ENCODE measurements at regions of chr3 and their contacts with region 1.

Region 1: GRCh38 chr3:152268555-152269425 is at the start of gene MBNL1:
- DNase-seq: peak; percentile 61 to 84 (median 78)
- H3K4me3 ChIP-seq: peak within 1 kb of the TSS; percentile 62 to 97 (median 89)
- H3K27ac ChIP-seq: peak within 1 kb of the TSS; percentile 88 to 100 (median 99)
- H3K27me3 ChIP-seq: no peaks in the 10 kb centered on the region
- CTCF ChIP-seq: peak in 21 of 56 donors; percentile 3 to 37 (median 17)
- total RNA-seq, gene MBNL1: 106 to 168 (median 132) TPM

Region 2: DNA sequence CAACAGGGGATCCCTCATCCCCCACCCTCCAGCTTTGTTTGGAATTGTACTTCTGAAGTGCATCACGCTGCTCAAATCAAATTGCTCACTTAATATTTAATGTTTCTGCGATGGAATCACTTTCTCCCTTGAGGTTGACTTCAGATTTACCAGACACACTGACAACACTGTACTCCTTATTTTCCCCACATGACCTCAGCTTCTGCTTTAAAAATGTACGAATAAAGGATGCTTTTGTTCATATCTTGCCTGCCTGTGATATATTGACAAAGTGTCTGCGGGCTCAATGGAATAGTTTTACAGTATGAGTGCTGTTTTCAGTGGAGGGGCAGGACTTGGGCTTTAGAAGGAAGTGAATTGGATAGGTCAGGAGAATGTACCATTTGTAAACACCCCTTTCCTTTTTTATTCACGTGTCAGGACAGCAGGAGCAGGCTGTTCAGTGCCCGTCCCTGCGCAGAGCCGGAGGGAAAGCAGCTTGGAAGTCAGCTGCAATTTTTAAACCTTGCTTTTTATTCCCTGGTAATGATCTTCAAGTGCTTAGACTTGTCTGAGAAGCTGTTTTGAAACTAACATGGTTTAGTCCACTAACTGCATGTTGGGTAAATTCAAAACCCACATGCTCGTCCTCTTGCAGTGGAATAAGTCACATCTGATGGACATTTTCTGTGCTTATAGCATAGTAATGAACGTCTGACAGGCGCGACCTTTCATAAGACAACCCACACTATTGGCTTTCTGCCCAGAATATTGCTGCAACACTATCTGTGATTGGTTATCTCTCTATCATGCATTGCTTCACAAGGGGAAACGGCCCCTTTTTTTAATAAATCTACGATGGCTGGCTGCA is 29.8 kb after region 1 on chr3:
- intact Hi-C with region 1: loop called in 1 of 2 experiments (anchors 2 kb)
- DNase-seq: peak in 2 of 10 donors; percentile 40 to 42
- H3K4me3 ChIP-seq: peak overlapping the region; percentile 32 to 79 (median 63)
- H3K27ac ChIP-seq: peak overlapping the region; percentile 36 to 97 (median 91)
- H3K27me3 ChIP-seq: no peaks in the 10 kb centered on the region
- CTCF ChIP-seq: peak in 2 of 56 donors; percentile 11 to 13

Region 3: DNA sequence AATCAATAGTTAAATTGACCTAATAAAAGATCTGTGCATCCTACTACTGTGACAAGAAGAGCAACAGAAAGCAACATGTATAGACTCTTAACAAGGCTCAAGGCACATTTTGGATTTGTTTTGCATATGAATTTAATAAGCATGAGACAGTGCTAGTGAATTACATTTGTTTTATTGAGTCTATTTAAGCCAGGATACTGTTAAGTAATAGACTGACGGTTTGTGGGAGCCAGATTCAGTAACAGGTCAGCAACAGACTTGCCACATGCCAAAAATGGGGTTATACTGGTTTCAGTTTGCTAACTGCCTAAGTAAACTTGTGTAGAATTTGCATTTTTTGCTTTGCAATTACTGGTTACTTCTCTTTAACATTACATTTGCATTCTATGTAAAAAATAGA is 54.0 kb after region 1 on chr3:
- intact Hi-C with region 1: no loop called
- DNase-seq: no peak
- H3K4me3 ChIP-seq: peak overlapping the region in 34 of 59 donors; percentile 1 to 46 (median 26)
- H3K27ac ChIP-seq: peak overlapping the region in 57 of 59 donors; percentile 2 to 85 (median 67)
- H3K27me3 ChIP-seq: no peaks in the 10 kb centered on the region
- CTCF ChIP-seq: no peak

Region 4: GRCh38 chr3:152385761-152386160 is 117.0 kb after region 1 on chr3:
- intact Hi-C with region 1: loop called (anchors 5 to 10 kb)
- DNase-seq: no peak
- H3K4me3 ChIP-seq: no peak overlapping the region
- H3K27ac ChIP-seq: peak overlapping the region in 50 of 59 donors; percentile 3 to 94 (median 84)
- H3K27me3 ChIP-seq: no peaks in the 10 kb centered on the region
- CTCF ChIP-seq: no peak

Measured in dorsolateral prefrontal cortex (tissue), 120 donors.